ENCODE measurements at regions of chr7 and their contacts with region 1.

Region 1: GRCh38 chr7:74569501-74570075 is 87.9 kb upstream of the GTF2I start:
- DNase-seq: peak in 2 of 3 donors; percentile 36 to 56
- H3K4me3 ChIP-seq: no peak overlapping the region
- H3K27ac ChIP-seq: no peak overlapping the region
- H3K4me1 ChIP-seq: peaks cover 0 to 3% (median 1%) of the 10 kb centered on the region in 4 experiments
- H3K27me3 ChIP-seq: no peaks in the 10 kb centered on the region

Region 2: DNA sequence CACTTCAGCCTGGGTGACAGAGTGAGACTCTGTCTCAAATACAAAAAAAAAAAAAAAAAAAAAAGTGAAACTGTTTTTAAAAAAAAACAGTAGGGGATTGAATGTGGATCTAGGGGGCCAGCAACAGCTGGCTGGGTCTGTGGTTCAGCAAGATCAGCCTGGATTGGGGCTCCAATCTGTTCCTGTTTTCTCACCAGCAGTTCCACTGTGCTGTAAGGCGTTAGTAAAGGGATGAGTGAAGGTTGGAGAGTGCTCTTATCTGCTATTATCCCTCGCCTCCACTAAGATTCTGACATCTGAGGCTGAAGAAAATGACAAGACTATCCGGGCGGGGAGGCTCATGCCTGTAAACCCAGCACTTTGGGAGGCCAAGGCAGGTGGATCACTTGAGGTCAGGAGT is 157.5 kb before region 1 on chr7:
- CTCF ChIA-PET with region 1: interaction called, 56 read pairs
- POLR2A ChIA-PET with region 1: no interaction called
- DNase-seq: peak; percentile 34 to 81 (median 73)
- H3K4me3 ChIP-seq: no peak overlapping the region
- H3K27ac ChIP-seq: no peak overlapping the region
- H3K4me1 ChIP-seq: peaks cover 0 to 3% (median 0%) of the 10 kb centered on the region in 4 experiments
- H3K27me3 ChIP-seq: no peaks in the 10 kb centered on the region

Region 3: GRCh38 chr7:74417419-74417971 is 152.1 kb before region 1 on chr7:
- CTCF ChIA-PET with region 1: interaction called, 56 read pairs
- POLR2A ChIA-PET with region 1: no interaction called
- DNase-seq: peak; percentile 34 to 60 (median 48)
- H3K4me3 ChIP-seq: no peak overlapping the region
- H3K27ac ChIP-seq: no peak overlapping the region
- H3K4me1 ChIP-seq: no peaks in the 10 kb centered on the region
- H3K27me3 ChIP-seq: no peaks in the 10 kb centered on the region

Region 4: GRCh38 chr7:74449809-74450397 is 119.7 kb before region 1 on chr7:
- CTCF ChIA-PET with region 1: interaction called, 24 read pairs
- POLR2A ChIA-PET with region 1: no interaction called
- DNase-seq: peak; percentile 59 to 78 (median 71)
- H3K4me3 ChIP-seq: no peak overlapping the region
- H3K27ac ChIP-seq: no peak overlapping the region
- H3K4me1 ChIP-seq: peaks cover 0 to 16% (median 14%) of the 10 kb centered on the region in 4 experiments
- H3K27me3 ChIP-seq: peaks cover 0 to 23% (median 8%) of the 10 kb centered on the region in 5 experiments

Region 5: DNA sequence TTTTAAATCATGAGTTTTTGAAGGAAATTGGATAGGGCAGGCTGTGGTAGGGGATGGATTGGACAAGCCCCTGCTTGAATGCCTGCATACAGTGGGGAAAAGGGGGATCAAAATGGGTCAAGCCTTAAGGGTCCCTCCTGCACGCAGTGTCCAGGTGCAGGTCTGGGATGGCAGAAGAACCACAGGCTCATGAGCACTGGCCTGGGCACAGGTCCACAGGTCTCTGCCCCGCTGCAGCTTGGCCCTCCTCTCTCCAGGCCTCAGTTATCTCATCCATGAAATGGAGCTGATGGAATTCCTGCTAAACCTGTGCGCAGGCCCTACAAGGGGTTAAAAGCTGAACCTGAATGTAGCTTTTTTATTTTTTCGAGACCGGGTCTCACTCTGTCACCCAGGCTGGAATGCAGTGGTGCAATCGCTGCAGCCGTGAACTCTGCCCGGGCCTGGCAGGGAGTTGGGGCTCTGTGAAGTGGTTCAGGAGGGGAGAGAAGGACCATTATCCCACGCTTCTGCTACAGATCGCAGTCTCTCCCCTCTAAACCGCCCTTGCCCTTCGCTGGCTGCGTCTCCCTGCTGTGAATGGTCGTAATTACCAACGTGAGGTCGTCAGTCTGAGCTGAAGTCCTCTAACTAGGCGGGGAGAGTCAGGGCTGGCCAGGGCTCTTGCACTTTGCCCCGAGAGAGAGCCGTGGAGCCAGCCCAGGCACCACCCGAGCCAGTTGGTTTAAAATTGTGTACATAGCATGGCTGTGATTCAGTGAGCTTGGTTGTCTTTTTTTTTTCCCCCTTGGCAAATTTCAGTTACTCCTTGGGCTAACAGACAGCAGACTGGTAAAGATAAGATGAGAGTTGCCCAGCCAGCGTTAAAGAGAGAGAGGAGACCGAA is 10.5 kb after region 1 on chr7:
- CTCF ChIA-PET with region 1: interaction called, 30 read pairs
- POLR2A ChIA-PET with region 1: interaction called, 3 read pairs
- DNase-seq: peak in 1 of 3 donors; percentile 21
- H3K4me3 ChIP-seq: no peak overlapping the region
- H3K27ac ChIP-seq: no peak overlapping the region
- H3K4me1 ChIP-seq: no peaks in the 10 kb centered on the region
- H3K27me3 ChIP-seq: no peaks in the 10 kb centered on the region

Measured in common myeloid progenitor, CD34-positive (primary cell).